ENCODE measurements at regions of chr2 and their contacts with region 1.

Region 1: DNA sequence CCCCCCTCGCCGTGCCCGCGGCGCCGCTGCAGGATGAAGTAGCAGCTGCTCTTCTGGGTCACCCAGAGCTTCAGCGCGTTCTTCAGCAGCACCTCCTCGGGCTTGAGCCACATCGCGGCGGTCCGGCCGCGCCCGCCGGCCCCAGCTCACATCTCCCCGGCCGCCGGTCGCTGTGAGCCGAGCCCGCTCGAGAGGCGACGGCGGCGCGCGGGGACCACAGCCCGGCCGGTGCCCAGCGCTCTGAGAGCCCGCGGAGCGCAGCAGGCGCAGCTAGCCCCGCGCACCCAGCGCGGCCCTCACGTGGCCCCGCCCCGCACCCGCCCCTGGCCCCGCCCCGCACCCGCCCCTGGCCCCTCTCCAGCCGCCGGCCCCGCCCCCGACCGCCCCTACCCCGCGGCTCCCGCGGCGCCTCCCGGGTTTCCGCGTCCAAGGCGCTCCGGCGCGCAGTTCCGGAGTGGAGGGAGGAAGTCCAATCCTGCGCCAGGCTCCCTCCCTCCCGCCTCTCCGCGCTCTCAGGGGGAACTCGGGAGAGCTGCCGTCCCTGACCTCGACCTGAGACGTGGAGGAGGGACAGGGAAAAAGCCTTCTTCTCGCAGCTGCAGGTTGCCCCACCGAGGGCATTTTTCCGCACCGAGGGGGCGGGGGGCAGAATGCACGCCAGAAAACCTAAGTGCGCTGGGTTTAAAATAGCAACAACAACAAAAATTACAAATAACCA is at the start of gene TBC1D8:
- DNase-seq: peak; percentile 84
- ATAC-seq: peak; percentile 67
- H3K4me3 ChIP-seq: peak within 1 kb of the TSS; percentile 83 to 97 (median 89)
- H3K27ac ChIP-seq: peak within 1 kb of the TSS; percentile 74
- H3K4me1 ChIP-seq: peaks cover 61% of the 10 kb centered on the region
- H3K27me3 ChIP-seq: no peaks in the 10 kb centered on the region; a peak in 1 of 5 replicates
- CTCF ChIP-seq: peak; percentile 15; the same call in 1 of the 2 replicates
- EP300 ChIP-seq: peak in 1 of 2 experiments; percentile 28; a peak in 1 of 4 replicates
- POLR2A ChIP-seq: peak; percentile 81 to 94
- RAD21 ChIP-seq: no peak
- total RNA-seq, gene TBC1D8: 24.6 and 45.1 TPM in 2 replicates

Region 2: DNA sequence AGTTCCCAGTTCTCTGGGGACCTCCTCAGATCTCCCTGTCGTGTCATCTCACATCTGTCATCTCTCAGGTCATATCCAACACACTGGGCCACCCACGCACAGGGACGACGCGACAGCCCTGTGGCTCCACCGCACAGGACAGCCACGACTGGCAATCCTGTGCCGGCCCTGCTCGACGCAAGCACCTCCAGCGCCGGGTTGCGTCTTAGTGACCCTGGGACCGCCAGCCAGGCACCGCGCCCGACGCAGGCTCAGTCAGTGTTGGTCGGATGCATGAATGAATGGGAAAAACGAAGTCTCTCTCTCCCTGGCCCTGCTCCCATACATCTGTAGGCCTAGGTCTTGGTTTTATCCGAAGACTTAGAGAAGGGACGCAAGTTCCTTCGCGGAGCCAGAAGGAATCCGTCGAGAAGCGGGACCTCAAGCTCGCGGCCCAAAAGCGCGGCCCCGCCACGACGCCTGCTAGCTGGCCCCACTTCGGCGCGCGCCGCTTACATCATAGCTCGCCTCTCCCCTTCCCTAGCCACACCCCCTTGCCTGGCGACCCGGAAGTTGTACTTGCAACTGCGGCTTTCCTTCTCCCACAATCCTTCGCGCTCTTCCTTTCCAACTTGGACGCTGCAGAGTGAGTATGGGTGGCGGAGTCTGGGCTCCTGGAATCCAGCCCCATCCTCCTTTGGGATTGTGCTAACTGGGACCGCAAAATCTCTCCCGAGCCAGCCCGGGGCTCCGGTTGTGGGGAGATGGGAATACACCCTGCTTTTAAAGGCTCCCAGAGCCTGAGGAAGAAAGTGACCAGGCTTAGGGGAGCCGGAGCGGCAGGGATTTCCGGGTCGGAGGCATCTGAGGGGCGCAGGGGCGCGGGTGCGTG is 149.4 kb before region 1 on chr2 and contains the start of gene RPL31:
- CTCF ChIA-PET with region 1: no interaction called
- POLR2A ChIA-PET with region 1: interaction called, 41 read pairs
- in situ Hi-C with region 1: no loop called
- intact Hi-C with region 1: no loop called
- DNase-seq: peak; percentile 98
- ATAC-seq: peak; percentile 91
- H3K4me3 ChIP-seq: peak within 1 kb of the TSS; percentile 81 to 96 (median 91)
- H3K27ac ChIP-seq: peak within 1 kb of the TSS; percentile 79
- H3K4me1 ChIP-seq: peaks cover 43% of the 10 kb centered on the region
- H3K27me3 ChIP-seq: no peaks in the 10 kb centered on the region; a peak in 1 of 5 replicates
- CTCF ChIP-seq: no peak; the same call in 1 of the 2 replicates
- EP300 ChIP-seq: peak; percentile 39 to 42; a peak in 2 of 4 replicates
- POLR2A ChIP-seq: peak; percentile 99 to 100
- RAD21 ChIP-seq: no peak; the same call in 1 of the 2 replicates
- total RNA-seq, gene RPL31: 3,331 and 4,246 TPM in 2 replicates

Region 3: GRCh38 chr2:101012706-101013181 is 138.6 kb before region 1 on chr2:
- CTCF ChIA-PET with region 1: interaction called, 53 read pairs
- POLR2A ChIA-PET with region 1: interaction called, 13 read pairs
- in situ Hi-C with region 1: no loop called
- intact Hi-C with region 1: loop called (anchors 1 kb)
- DNase-seq: peak; percentile 50
- ATAC-seq: no peak
- H3K4me3 ChIP-seq: no peak overlapping the region
- H3K27ac ChIP-seq: no peak overlapping the region
- H3K4me1 ChIP-seq: no peaks in the 10 kb centered on the region
- H3K27me3 ChIP-seq: no peaks in the 10 kb centered on the region
- CTCF ChIP-seq: peak; percentile 85
- EP300 ChIP-seq: no peak
- POLR2A ChIP-seq: no peak; a peak in 1 of 4 replicates
- RAD21 ChIP-seq: peak; percentile 82

Region 4: DNA sequence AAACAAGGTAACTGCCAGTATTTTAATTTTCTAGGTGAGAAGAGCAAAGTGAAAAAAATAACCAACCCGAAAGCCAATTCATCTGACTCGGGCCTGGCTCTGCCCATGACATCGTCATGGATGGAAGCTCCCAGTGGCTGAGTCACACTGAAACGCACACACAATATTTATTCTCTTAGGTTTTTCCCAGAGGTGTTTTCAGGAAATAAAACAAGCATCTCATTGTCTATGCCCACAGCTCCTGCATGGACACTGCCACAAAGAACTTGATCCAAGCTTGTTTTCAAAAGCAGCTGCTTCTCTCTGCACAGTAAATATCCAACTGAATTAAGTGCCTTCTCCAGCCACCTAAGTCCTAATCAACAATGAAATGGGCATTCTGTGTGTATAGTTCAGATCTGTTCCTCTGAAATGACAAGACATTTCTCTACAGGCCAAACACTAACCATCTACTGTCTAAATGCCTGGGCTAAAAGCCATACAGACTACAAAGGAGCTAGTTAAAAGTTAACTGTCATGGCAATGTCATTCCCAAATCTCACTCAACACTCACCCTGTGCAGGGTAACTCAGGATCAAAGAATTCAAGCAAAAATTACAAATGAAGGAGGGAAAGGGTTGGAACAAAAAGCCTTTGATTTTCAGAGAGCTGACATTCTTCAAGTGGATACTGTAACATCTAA is 86.3 kb before region 1 on chr2:
- CTCF ChIA-PET with region 1: no interaction called
- POLR2A ChIA-PET with region 1: interaction called, 54 read pairs
- in situ Hi-C with region 1: no loop called
- intact Hi-C with region 1: loop called (anchors 1 kb)
- DNase-seq: peak; percentile 98
- ATAC-seq: peak; percentile 91
- H3K4me3 ChIP-seq: peak overlapping the region; percentile 18 to 56 (median 35); a peak in 4 of 6 replicates
- H3K27ac ChIP-seq: peak overlapping the region; percentile 92
- H3K4me1 ChIP-seq: peaks cover 69% of the 10 kb centered on the region
- H3K27me3 ChIP-seq: no peaks in the 10 kb centered on the region
- CTCF ChIP-seq: no peak
- EP300 ChIP-seq: peak in 1 of 2 experiments; percentile 88; a peak in 2 of 4 replicates
- POLR2A ChIP-seq: 0 out of 4 replicates have a peak, but pooled peaks of 1 of the 2 experiments have one; percentile 26
- RAD21 ChIP-seq: no peak

Region 5: GRCh38 chr2:101120172-101120996 is 30.9 kb before region 1 on chr2:
- CTCF ChIA-PET with region 1: no interaction called
- POLR2A ChIA-PET with region 1: interaction called, 49 read pairs
- in situ Hi-C with region 1: no loop called
- intact Hi-C with region 1: loop called (anchors 1 kb)
- DNase-seq: peak; percentile 98
- ATAC-seq: peak; percentile 69
- H3K4me3 ChIP-seq: peak overlapping the region in 1 of 3 experiments; percentile 11; a peak in 1 of 6 replicates
- H3K27ac ChIP-seq: peak overlapping the region; percentile 79
- H3K4me1 ChIP-seq: peaks cover 97% of the 10 kb centered on the region
- H3K27me3 ChIP-seq: no peaks in the 10 kb centered on the region
- CTCF ChIP-seq: no peak
- EP300 ChIP-seq: peak; percentile 42 to 75; a peak in 2 of 4 replicates
- POLR2A ChIP-seq: 0 out of 4 replicates have a peak, but pooled peaks of 1 of the 2 experiments have one; percentile 38
- RAD21 ChIP-seq: peak; percentile 49; the same call in 1 of the 2 replicates

Region 6: GRCh38 chr2:101692041-101692440 is 540.7 kb after region 1 on chr2:
- CTCF ChIA-PET with region 1: no interaction called
- POLR2A ChIA-PET with region 1: no interaction called
- in situ Hi-C with region 1: no loop called
- intact Hi-C with region 1: no loop called
- DNase-seq: no peak
- ATAC-seq: no peak
- H3K4me3 ChIP-seq: no peak overlapping the region
- H3K27ac ChIP-seq: no peak overlapping the region
- H3K4me1 ChIP-seq: peaks cover 76% of the 10 kb centered on the region
- H3K27me3 ChIP-seq: no peaks in the 10 kb centered on the region
- CTCF ChIP-seq: no peak
- EP300 ChIP-seq: no peak
- POLR2A ChIP-seq: no peak
- RAD21 ChIP-seq: no peak